ENCODE measurements at regions of chr10 and their contacts with region 1.

Region 1: DNA sequence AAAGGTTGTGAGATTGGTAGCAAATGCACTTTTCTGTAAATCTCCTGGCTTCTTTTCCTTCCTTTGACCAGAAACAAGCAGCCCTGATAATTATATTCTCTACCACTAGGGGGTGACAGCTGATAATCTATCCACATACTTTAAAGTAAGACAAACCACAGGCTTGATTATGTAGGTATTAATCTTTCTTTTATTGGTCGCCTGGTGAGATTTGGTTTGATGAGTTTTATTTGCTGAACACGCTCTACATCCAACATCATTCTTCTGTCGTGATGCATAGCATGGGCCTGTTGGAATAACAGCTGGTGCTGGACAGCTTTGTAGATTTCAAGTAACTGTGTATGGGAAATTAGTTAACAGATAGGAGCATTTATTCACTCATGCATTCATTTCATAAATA is 63.5 kb downstream of the ZNF365 start:
- DNase-seq: no peak
- H3K4me3 ChIP-seq: no peak overlapping the region
- H3K27ac ChIP-seq: no peak overlapping the region
- H3K4me1 ChIP-seq: no peaks in the 10 kb centered on the region
- H3K27me3 ChIP-seq: no peaks in the 10 kb centered on the region
- CTCF ChIP-seq: peak; percentile 73 to 83 (median 78)
- POLR2A ChIP-seq: no peak

Region 2: DNA sequence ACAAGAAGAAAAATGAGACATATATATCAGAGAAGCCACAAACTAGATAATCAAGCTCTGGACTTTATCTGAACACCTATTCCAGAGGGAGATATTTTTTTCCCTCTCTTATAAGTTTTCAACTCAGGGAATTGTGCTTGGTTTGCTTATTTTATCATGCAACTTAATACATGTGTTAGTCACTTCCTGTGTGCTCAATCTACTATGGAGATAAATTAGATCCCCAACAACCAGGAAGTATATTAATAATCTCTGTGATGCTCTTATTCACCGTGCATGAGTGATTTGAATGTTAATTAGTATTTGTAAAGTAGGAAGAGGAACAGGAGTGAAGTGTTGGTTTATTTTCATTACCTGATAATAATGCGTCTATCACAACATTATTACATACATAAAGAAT is 102.4 kb before region 1 on chr10:
- intact Hi-C with region 1: no loop called
- DNase-seq: no peak
- H3K4me3 ChIP-seq: no peak overlapping the region
- H3K27ac ChIP-seq: no peak overlapping the region
- H3K4me1 ChIP-seq: no peaks in the 10 kb centered on the region
- H3K27me3 ChIP-seq: no peaks in the 10 kb centered on the region
- CTCF ChIP-seq: no peak
- POLR2A ChIP-seq: no peak

Region 3: DNA sequence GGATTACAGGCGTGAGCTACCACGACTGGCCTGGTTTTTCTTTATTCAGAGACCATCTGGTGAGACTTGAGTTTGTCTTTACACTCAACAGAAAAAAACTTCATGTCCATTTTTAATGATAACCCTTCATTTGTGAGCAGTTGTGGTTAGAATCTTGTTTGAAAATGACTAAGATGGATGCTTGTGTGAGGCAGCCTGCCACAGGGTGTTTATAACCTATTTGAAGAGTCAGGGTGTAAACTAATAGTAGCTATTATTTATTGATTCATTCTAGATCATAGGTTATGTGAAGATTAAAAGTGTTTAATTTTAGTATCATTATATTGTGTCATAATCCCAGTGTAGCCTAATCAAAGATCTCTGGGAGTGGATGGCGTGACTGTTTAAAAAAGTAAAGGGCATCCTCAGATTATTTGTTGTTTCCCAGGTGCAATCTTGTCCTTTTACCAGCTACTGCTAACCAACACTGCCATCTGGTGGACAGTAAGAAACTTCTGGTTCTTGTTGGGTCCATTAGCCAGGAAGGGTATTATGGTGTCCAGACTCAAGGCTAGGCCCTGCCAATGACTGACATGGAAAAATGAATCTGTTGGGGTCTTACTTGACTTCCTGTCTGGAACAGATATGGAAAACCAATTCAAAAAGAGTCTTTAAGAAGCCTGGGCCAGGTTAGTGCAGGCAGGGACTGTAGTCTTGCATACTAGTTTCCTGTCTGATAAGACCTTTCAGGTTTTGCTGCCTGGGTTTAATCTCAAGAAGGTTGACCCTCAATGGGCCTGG is 720.3 kb after region 1 on chr10:
- intact Hi-C with region 1: loop called (anchors 5 kb)
- DNase-seq: peak in 1 of 2 donors; percentile 47
- H3K4me3 ChIP-seq: no peak overlapping the region
- H3K27ac ChIP-seq: peak overlapping the region in 1 of 2 donors; percentile 50
- H3K4me1 ChIP-seq: peaks cover 0 to 13% of the 10 kb centered on the region in 2 donors
- H3K27me3 ChIP-seq: no peaks in the 10 kb centered on the region
- CTCF ChIP-seq: peak; percentile 78 to 85 (median 81)
- POLR2A ChIP-seq: no peak

Measured in uterus (tissue), 4 donors.